A549 (cell line): ENCODE measurements at regions of chr20 and their contacts with region 1.

Region 1: DNA sequence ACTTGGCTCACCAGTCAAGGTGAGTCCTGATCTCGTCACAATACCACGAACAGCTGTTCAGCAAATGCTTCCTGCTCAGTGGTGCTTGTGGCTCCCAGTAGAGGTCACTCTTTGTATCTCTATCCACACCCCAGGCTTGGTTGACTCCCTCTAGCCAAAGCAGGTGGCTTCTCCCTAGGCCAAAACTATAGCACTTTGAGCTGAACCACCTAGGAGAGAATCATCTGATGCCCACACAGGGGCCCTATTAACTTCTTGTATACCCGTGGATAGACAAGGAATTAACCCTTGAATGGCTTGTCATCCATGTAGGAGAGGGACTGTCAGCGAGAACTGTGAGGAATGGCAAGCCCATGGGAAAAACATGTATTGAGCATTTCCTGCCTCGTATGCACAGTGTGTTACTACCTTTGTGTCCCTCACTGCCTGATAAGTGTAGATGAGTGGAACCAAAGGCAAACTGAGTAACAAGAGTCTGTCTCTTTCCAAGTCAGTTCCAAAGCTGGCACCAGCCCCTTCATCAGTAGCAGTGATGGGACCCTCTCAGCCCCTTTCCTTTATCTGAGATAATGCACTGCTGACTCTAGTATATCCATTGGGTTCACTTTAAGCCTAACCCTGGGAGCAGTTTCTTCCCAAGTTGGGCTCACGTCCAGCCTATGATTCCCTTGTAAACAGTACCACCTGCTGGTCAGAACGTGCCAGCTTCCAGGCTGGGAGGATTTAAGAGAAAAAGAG is 42.5 kb downstream of the EIF2S2 start:
- DNase-seq: peak; percentile 66 to 83
- ATAC-seq: peak; percentile 91
- H3K4me3 ChIP-seq: no peak overlapping the region
- H3K27ac ChIP-seq: no peak overlapping the region
- H3K4me1 ChIP-seq: 0 out of 3 replicates have a peak, but pooled peaks cover 9% of the 10 kb centered on the region
- CTCF ChIP-seq: peak; percentile 88
- EP300 ChIP-seq: no peak
- POLR2A ChIP-seq: no peak
- RAD21 ChIP-seq: peak; percentile 90 to 96

Region 2: GRCh38 chr20:33653218-33653899 is 416.2 kb before region 1 on chr20:
- CTCF ChIA-PET with region 1: interaction called, 12 read pairs
- POLR2A ChIA-PET with region 1: no interaction called
- DNase-seq: peak; percentile 72 to 73
- ATAC-seq: peak; percentile 82 to 87
- H3K4me3 ChIP-seq: no peak overlapping the region
- H3K27ac ChIP-seq: peak overlapping the region in 1 of 2 experiments; percentile 47; a peak in 2 of 6 replicates
- H3K4me1 ChIP-seq: peaks cover 4% of the 10 kb centered on the region; the same call in 1 of the 3 replicates
- CTCF ChIP-seq: peak; percentile 87
- EP300 ChIP-seq: no peak
- POLR2A ChIP-seq: no peak
- RAD21 ChIP-seq: peak; percentile 79 to 93

Region 3: DNA sequence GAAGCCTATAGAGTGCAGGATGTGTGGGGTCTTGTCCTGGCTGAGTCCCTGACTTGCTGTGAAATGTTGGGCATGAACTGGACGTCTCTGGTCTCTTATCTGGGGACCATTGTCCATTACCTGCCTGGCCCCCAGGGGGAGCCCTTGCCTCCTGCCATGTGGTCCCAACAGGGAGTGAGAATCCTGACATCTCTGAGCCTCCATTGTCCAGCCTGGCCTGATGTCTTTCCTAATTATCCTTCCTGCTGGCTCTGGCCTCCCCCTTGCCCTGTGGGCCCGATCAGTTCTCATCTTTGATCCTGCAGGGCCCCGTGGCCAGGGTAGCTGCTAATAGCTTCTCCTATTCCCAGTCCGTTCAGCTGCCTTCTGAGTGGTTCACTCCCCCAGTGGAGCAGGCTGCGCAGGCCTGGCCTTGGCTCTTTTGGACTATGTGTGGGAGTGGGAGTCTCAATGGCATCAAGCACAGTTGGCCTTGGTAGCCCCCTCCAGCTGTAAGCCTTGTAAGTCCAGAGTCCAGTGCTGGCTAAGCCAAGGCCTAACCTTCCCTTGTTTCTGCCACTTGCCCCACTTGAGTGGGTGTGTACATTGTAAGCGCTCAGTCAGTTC is 153.7 kb before region 1 on chr20:
- CTCF ChIA-PET with region 1: interaction called, 19 read pairs
- POLR2A ChIA-PET with region 1: no interaction called
- DNase-seq: peak; percentile 32 to 84
- ATAC-seq: peak; percentile 77 to 88
- H3K4me3 ChIP-seq: no peak overlapping the region
- H3K27ac ChIP-seq: no peak overlapping the region
- H3K4me1 ChIP-seq: 0 out of 3 replicates have a peak, but pooled peaks cover 2% of the 10 kb centered on the region
- CTCF ChIP-seq: peak; percentile 61
- EP300 ChIP-seq: no peak
- POLR2A ChIP-seq: no peak
- RAD21 ChIP-seq: peak; percentile 50 to 57; a peak in 4 of 5 replicates

Region 4: DNA sequence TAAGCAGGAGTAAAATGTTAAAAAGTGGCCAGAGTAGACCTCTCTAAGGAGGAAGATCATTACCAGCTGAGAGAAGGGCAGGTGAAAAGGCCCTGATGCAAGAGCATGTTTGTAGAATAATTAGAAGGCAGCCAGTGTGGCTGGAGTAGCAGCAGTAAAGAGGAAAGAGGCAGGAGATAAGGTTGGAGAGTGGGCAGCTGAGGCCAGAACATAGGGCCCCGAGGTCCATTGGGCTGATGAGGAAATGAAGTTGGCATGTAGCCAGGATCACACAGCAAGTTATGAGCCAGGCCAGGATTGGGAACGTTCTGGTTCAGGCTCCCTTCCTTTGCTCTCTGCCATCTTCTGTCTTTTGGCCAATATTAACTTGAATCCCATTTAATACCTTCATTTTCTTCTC is 24.2 kb before region 1 on chr20:
- CTCF ChIA-PET with region 1: interaction called, 30 read pairs
- POLR2A ChIA-PET with region 1: no interaction called
- DNase-seq: no peak
- ATAC-seq: no peak
- H3K4me3 ChIP-seq: no peak overlapping the region
- H3K27ac ChIP-seq: no peak overlapping the region
- H3K4me1 ChIP-seq: peaks cover 12% of the 10 kb centered on the region; the same call in 2 of the 3 replicates
- CTCF ChIP-seq: no peak
- EP300 ChIP-seq: no peak
- POLR2A ChIP-seq: no peak
- RAD21 ChIP-seq: no peak

Region 5: GRCh38 chr20:34083137-34083536 is 13.6 kb after region 1 on chr20:
- CTCF ChIA-PET with region 1: interaction called, 31 read pairs
- POLR2A ChIA-PET with region 1: no interaction called
- DNase-seq: peak in 1 of 2 experiments; percentile 33
- ATAC-seq: peak in 1 of 2 experiments; percentile 37; a peak in 4 of 6 replicates
- H3K4me3 ChIP-seq: no peak overlapping the region
- H3K27ac ChIP-seq: no peak overlapping the region
- H3K4me1 ChIP-seq: no peaks in the 10 kb centered on the region
- CTCF ChIP-seq: no peak
- EP300 ChIP-seq: no peak
- POLR2A ChIP-seq: no peak
- RAD21 ChIP-seq: no peak